ENCODE measurements at regions of chr1 and their contacts with region 1.

Region 1: GRCh38 chr1:6784560-6785317 is 515 bp upstream of the CAMTA1 start:
- DNase-seq: peak; percentile 100
- H3K4me3 Mint-ChIP-seq: peak overlapping the region; percentile 79
- H3K27ac Mint-ChIP-seq: peak overlapping the region; percentile 69
- H3K4me1 Mint-ChIP-seq: peaks cover 41% of the 10 kb centered on the region
- H3K27me3 Mint-ChIP-seq: no peaks in the 10 kb centered on the region

Region 2: GRCh38 chr1:6523566-6523965 is 261.2 kb before region 1 on chr1:
- CTCF ChIA-PET with region 1: no interaction called
- intact Hi-C with region 1: no loop called
- DNase-seq: no peak
- H3K4me3 Mint-ChIP-seq: no peak overlapping the region
- H3K27ac Mint-ChIP-seq: no peak overlapping the region
- H3K4me1 Mint-ChIP-seq: no peaks in the 10 kb centered on the region
- H3K27me3 Mint-ChIP-seq: no peaks in the 10 kb centered on the region

Region 3: GRCh38 chr1:6701437-6702153 is 83.1 kb before region 1 on chr1 and contains the start of gene DNAJC11:
- CTCF ChIA-PET with region 1: no interaction called
- intact Hi-C with region 1: loop called (anchors 1 kb)
- DNase-seq: peak; percentile 91
- H3K4me3 Mint-ChIP-seq: peak within 1 kb of the TSS; percentile 88
- H3K27ac Mint-ChIP-seq: peak within 1 kb of the TSS; percentile 86
- H3K4me1 Mint-ChIP-seq: peaks cover 31% of the 10 kb centered on the region
- H3K27me3 Mint-ChIP-seq: no peaks in the 10 kb centered on the region
- total RNA-seq, gene DNAJC11: 31.6 to 32.5 TPM

Region 4: DNA sequence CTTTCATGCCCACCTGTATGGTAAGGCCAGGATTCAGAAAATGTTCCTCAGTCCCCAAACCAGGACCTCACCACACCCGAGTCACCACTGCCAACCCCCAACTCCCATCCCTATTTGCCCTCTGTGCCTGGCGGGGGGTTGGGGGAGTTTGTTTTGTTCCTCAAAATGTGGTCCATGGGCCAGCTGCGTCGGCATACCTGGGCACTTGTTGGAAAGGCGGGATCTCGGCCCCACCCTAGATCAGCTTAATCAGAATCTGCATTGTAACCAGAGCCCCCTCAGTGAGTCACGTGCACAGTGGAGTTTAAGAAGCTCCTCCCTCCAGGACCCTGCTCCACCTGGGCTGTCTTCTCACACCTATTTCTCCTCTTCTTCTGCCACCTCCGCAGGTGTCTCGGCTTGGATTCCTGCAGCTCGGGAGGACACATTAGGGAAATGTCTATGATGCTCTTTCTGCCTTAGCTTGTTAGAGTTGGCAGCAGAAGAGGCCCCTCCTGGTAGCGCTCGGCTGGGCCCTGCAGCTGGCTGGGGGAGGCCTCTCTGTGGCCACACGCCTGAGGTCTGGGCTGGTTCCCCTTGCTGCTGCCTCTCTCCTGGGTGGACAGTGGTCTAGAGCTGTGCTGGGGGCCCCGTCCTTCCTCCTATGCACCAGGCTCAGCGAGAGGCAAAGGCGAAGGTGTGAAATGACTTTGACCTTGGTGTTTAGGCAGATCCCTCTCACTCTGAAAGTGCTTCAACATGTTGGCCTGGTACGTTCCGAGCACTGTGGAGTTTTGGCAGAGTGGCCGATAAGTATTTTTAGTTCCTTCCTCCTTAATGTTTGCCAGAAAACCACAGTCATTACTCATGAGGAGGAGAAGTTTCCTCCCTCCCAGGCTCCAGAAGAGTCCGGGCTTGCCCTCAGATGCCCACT is 41.3 kb before region 1 on chr1:
- CTCF ChIA-PET with region 1: interaction called, 3 read pairs
- intact Hi-C with region 1: loop called (anchors 2 kb)
- DNase-seq: peak; percentile 36
- H3K4me3 Mint-ChIP-seq: no peak overlapping the region
- H3K27ac Mint-ChIP-seq: no peak overlapping the region
- H3K4me1 Mint-ChIP-seq: peaks cover 14% of the 10 kb centered on the region
- H3K27me3 Mint-ChIP-seq: peaks cover 3% of the 10 kb centered on the region

Region 5: DNA sequence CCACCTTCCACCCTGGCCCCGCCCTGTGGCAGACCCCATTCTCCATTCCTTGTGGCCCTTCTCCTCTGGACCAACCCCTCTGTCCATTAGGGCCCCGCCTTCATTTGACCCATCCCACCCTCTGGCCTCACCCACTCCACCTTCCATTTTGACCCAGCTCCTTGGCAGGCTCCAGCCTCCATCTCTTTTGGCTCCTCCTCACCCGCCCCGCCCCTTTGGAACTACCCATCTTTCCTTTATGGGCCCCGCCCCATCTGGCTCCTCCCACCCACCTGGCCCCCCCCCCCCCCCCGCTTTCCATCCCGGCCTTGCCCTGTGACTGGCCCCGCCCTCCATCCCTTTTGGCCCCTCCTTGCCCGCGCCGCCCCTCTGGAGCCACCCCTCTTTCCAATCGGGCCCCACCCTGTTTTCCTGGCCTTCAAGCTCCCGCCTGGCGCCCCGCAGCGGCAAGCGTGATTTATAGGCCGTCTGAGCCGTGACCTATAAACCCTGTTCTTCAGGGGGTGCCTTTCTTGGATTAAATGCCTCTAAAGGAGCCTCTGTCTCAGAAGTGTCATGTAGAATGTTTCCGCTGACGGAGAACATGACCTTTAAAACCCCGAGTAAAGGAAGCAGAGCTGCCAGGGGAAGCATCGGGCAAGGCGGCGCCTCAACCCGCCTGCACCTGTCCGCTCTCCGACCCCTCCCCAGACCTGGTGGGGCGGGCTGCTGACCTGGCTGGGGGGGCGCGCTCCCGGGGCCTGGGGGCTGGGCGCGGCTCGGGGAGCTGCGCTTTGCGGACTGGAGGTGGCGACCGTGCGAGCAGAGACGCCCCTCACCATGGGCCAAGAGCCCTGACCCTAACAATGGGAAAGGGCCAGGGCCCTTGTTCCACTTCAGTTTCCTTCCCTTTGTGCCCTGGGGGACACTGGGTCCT is 178.5 kb after region 1 on chr1:
- CTCF ChIA-PET with region 1: no interaction called
- intact Hi-C with region 1: loop called (anchors 1 kb)
- DNase-seq: peak; percentile 91
- H3K4me3 Mint-ChIP-seq: peak overlapping the region; percentile 74
- H3K27ac Mint-ChIP-seq: peak overlapping the region; percentile 80
- H3K4me1 Mint-ChIP-seq: peaks cover 22% of the 10 kb centered on the region
- H3K27me3 Mint-ChIP-seq: peaks cover 16% of the 10 kb centered on the region

Region 6: DNA sequence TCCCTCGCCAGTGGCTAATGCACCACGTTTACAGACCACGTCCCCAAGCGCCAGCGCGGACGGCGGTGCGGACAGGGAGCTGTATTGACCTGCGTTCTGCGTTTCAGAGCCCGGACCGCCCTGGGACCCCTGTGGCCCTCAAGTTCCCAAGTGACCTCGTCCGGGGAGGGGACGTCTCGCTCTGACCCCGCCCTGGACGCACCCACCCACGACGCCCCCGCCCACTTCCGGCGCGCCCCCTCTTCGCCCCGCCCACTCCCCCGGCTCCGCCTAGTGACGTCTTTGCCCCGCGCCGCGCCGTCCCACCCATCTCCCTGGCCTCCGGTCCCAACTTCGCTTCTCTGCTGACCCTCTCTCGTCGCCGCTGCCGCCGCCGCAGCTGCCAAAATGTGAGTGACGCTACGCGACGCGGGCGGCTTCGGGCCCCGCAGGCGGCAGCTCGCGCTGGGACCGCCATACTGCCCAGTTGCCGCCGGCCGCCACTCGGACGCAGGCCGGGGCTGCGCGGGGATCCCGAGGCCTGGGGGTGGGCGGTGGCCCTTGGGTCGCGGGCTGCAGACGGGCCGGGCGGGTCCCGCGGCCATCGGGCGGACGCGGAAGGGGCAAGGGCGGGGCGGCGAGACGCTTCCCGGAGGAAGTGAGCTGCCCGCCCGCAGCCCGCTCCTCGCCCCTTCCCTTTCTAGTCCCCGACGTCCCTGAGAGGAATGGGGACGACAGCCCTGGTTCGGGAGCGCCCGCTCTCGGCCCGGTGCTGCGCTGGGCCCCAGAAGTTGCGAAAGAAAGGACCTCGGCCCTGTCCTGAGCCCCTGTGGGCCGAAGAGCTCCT is 986.5 kb after region 1 on chr1 and contains the start of gene VAMP3:
- CTCF ChIA-PET with region 1: no interaction called
- intact Hi-C with region 1: loop called (anchors 10 kb)
- DNase-seq: peak; percentile 89
- H3K4me3 Mint-ChIP-seq: peak within 1 kb of the TSS; percentile 83
- H3K27ac Mint-ChIP-seq: peak within 1 kb of the TSS; percentile 60
- H3K4me1 Mint-ChIP-seq: peaks cover 34% of the 10 kb centered on the region
- H3K27me3 Mint-ChIP-seq: peaks cover 6% of the 10 kb centered on the region
- total RNA-seq, gene VAMP3: 16.7 to 19.4 TPM

Measured in activated naive CD4-positive, alpha-beta T cell treated with anti-CD3 and anti-CD28 coated beads for 36 hours (primary cell).